Gastrocnemius medialis (tissue), 4 donors: ENCODE measurements at regions of chr1 and their contacts with region 1.

Region 1: GRCh38 chr1:231240883-231241735 is at the start of gene GNPAT:
- DNase-seq: peak; percentile 74 to 80
- ATAC-seq: peak; percentile 76 to 81
- H3K4me3 ChIP-seq: peak within 1 kb of the TSS; percentile 76 to 93 (median 84)
- H3K27ac ChIP-seq: peak within 1 kb of the TSS; percentile 86 to 91 (median 90)
- H3K4me1 ChIP-seq: peaks cover 46 to 49% of the 10 kb centered on the region in 2 donors
- H3K27me3 ChIP-seq: no peaks in the 10 kb centered on the region
- CTCF ChIP-seq: no peak
- POLR2A ChIP-seq: peak; percentile 85 to 91
- total RNA-seq, gene GNPAT: 95.1 to 128 (median 104) TPM

Region 2: DNA sequence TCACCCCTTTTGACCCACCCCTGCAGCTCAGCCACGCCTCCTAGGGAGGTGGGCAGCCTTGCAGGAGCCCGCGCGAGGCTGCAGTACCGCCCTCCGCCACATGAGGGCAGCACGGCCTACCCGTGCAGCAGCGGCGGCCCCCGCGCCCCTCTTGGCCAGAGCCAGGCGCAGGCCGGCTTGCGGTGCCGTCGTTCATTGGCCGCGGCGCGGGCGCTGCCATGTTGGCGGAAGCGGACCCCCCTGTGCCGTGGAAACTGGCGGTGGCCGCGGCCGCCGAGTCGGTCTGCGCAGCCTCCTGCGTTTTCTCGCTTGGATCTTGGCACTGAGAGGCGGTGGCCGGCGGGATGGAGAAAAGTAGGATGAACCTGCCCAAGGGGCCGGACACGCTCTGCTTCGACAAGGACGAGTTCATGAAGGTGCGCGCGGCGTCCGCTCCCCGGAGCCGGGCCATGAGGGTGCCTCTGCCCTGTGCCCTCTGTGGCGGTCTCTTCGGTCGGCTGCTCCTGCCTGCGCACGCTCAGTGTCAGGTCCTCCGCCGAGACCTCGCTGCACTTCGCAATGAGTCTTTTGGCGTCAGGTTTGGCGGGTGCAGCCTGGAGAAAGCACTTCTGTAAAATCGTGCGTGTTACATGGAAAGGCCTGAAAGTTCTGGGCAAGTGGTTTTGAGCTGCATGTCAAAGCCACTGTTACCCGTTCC is 598.7 kb before region 1 on chr1 and contains the start of gene COG2:
- in situ Hi-C with region 1: no loop called
- intact Hi-C with region 1: loop called (anchors 1 kb)
- DNase-seq: peak; percentile 87 to 91
- ATAC-seq: peak; percentile 96 to 97
- H3K4me3 ChIP-seq: peak within 1 kb of the TSS; percentile 77 to 89 (median 78)
- H3K27ac ChIP-seq: peak within 1 kb of the TSS; percentile 85 to 94 (median 87)
- H3K4me1 ChIP-seq: peaks cover 21 to 24% of the 10 kb centered on the region in 2 donors
- H3K27me3 ChIP-seq: no peaks in the 10 kb centered on the region
- CTCF ChIP-seq: peak; percentile 98 to 100 (median 99)
- POLR2A ChIP-seq: peak; percentile 60 to 73
- total RNA-seq, gene COG2: 21.5 to 46.5 (median 27.4) TPM

Region 3: DNA sequence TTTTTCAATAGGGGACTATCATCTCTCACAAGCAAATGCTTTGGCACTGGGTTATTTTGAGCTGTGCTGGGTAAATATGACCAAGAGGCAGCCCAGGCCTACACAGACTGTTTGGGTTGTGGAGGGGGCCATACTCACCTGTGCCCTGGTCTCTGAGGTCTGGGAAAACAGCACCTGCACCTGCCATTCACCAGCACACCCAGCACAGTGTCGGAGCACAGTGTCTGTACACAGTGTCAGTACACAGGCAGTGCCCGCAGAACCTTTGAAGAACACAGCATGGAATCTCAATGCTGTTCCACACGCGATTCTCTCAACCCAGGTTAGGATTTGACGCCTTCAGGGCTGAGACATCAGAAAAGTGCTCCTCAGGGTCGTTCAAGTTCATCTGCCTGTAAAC is 166.1 kb before region 1 on chr1:
- in situ Hi-C with region 1: no loop called
- intact Hi-C with region 1: no loop called
- DNase-seq: no peak
- ATAC-seq: no peak
- H3K4me3 ChIP-seq: no peak overlapping the region
- H3K27ac ChIP-seq: no peak overlapping the region
- H3K4me1 ChIP-seq: no peaks in the 10 kb centered on the region
- H3K27me3 ChIP-seq: no peaks in the 10 kb centered on the region
- CTCF ChIP-seq: no peak
- POLR2A ChIP-seq: no peak

Region 4: GRCh38 chr1:231272880-231273279 is 31.8 kb after region 1 on chr1:
- in situ Hi-C with region 1: no loop called
- intact Hi-C with region 1: loop called (anchors 2 kb)
- DNase-seq: no peak
- ATAC-seq: no peak
- H3K4me3 ChIP-seq: no peak overlapping the region
- H3K27ac ChIP-seq: peak overlapping the region in 1 of 4 donors; percentile 7
- H3K4me1 ChIP-seq: peaks cover 4 to 9% of the 10 kb centered on the region in 2 donors
- H3K27me3 ChIP-seq: no peaks in the 10 kb centered on the region
- CTCF ChIP-seq: no peak
- POLR2A ChIP-seq: no peak

Region 5: DNA sequence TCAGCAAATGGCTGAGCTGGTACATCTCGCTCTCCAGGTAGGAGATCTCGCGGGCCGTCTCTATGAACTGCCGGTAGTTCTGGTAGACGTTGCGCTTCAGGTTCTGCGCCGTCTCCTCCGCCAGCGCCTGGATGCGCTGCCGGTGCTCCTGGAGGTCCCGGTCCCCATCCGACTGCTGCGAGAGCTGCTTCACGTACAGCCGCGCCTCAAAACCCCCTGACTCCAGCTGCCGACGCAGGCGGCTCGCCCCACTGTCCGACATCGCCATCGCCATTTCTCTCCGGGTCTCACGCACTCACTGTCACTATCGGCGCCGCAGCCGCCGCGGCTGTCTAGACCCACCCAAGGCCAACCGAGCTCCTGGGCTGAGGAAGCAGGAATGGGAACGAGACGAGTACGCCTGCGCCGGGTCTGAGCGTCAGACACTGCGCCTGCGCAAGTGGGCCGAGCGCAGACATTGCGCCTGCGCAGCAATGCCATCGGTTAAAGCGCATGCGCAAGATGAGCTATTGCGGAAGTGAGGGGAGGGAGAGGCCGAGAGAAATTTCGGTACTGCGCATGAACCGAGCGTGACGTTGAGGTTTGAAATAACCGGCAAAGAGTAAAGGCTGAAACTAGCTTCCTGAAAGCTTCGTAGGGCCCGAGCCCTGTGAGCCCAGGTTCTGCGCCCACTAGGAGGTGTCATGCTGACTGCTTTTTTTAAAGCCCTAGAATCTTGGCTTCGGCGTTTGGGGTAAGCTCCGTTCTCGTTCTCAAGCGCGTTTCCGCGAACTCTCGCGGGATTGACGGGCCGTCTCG is 96.6 kb after region 1 on chr1 and contains the start of gene EXOC8:
- in situ Hi-C with region 1: loop called in 1 of 4 experiments (anchors 10 kb)
- intact Hi-C with region 1: loop called (anchors 2 kb)
- DNase-seq: peak; percentile 91 to 94
- ATAC-seq: peak; percentile 80 to 88
- H3K4me3 ChIP-seq: peak within 1 kb of the TSS; percentile 75 to 91 (median 77)
- H3K27ac ChIP-seq: peak within 1 kb of the TSS; percentile 88 to 92 (median 90)
- H3K4me1 ChIP-seq: peaks cover 40% of the 10 kb centered on the region in 2 donors
- H3K27me3 ChIP-seq: no peaks in the 10 kb centered on the region
- CTCF ChIP-seq: no peak
- POLR2A ChIP-seq: peak; percentile 90 to 96
- total RNA-seq, gene EXOC8: 25.4 to 50.9 (median 38.2) TPM

Region 6: DNA sequence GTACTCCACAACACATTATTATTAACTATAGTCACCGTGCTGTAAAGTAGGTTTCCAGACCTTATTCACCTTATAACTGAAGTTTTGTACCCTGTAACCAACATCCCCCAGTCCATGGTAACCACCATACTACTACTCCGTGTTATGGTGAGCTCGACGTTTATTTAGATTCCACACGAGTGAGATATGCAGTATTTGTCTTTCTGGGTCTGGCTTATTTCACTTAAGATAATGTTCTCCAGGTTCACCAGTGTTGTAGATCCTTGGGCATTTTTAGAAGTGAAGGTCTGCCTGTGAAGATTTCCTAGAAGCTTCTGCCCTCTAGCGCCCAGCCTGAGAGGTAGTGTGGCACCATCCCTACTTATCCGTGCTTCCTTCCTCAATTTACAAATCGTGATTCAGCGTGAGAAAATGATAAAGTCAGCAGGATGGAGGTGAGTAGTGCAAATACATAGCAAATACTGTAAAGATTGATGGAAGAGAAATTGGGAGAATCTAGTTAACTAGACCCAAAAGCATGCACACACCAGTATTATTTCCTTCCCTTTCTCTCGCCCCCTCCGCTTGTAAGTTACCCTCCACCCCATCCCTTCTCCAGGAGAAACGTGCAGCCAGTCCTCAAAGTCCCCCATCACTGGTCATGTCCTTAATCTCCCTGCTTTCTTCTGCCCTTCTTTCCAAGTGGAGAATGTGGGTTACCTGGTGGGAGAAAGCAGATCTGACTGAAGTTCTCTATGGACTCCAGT is 349.5 kb after region 1 on chr1:
- in situ Hi-C with region 1: no loop called
- intact Hi-C with region 1: loop called (anchors 5 kb)
- DNase-seq: peak in 1 of 2 donors; percentile 32
- ATAC-seq: peak; percentile 82 to 92
- H3K4me3 ChIP-seq: no peak overlapping the region
- H3K27ac ChIP-seq: peak overlapping the region in 3 of 4 donors; percentile 20 to 42 (median 36)
- H3K4me1 ChIP-seq: peaks cover 3 to 12% of the 10 kb centered on the region in 2 donors
- H3K27me3 ChIP-seq: no peaks in the 10 kb centered on the region
- CTCF ChIP-seq: peak; percentile 61 to 76 (median 72)
- POLR2A ChIP-seq: no peak

Region 7: DNA sequence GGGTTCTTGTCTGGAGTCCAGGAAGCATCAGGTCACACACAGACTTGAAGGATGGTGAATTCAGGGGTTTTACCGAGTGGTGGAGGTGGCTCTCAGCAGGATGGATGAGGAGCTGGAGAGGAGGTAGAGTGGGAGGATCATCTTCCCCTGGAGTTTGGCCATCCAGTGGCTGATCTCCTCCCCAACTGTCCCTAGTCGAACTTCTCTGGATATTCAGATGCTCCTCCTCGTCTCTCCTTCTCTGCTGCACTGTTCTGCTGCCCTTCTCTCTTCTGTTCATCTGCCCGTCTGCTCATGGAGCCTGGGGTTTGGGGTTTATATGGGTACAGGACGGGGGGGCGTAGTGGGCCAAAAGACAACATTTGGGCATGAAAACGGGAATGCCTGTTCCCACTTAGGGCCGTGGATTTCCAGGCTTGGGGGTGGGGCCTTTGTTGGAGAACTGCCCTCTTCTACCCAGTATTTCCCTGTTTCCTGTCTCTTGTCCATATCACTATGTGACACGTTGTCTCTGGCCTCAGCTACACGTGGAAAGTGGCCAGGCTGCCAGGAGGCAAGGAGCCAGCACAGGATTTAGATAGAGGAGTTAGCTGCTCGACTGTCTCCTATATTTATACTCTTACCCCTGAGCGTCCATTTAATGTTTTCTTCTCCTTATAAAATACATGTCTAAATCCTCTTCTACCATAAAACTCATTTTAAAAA is 1312.1 kb after region 1 on chr1:
- in situ Hi-C with region 1: no loop called
- intact Hi-C with region 1: loop called (anchors 10 kb)
- DNase-seq: peak; percentile 28 to 56
- ATAC-seq: peak; percentile 66 to 75
- H3K4me3 ChIP-seq: no peak overlapping the region
- H3K27ac ChIP-seq: peak overlapping the region in 2 of 4 donors; percentile 23 to 27
- H3K4me1 ChIP-seq: peaks cover 30 to 44% of the 10 kb centered on the region in 2 donors
- H3K27me3 ChIP-seq: no peaks in the 10 kb centered on the region
- CTCF ChIP-seq: no peak
- POLR2A ChIP-seq: no peak